Dendritic cell treated with granulocyte-macrophage colony-stimulating factor and Interleukin-4, amounts not matched to agents 40 ng/mL and 50 ng/mL, for 4 days (primary cell): ENCODE measurements at regions of chr9 and their contacts with region 1.

Region 1: GRCh38 chr9:121185178-121185745 is 16.4 kb downstream of the RAB14 start:
- H3K4me3 Mint-ChIP-seq: no peak overlapping the region
- H3K27ac Mint-ChIP-seq: no peak overlapping the region
- H3K4me1 Mint-ChIP-seq: peaks cover 17% of the 10 kb centered on the region
- H3K27me3 Mint-ChIP-seq: no peaks in the 10 kb centered on the region

Region 2: GRCh38 chr9:120985810-120986222 is 199.4 kb before region 1 on chr9:
- intact Hi-C with region 1: loop called (anchors 10 kb)
- H3K4me3 Mint-ChIP-seq: no peak overlapping the region
- H3K27ac Mint-ChIP-seq: no peak overlapping the region
- H3K4me1 Mint-ChIP-seq: no peaks in the 10 kb centered on the region
- H3K27me3 Mint-ChIP-seq: no peaks in the 10 kb centered on the region

Region 3: GRCh38 chr9:121115466-121115865 is 69.8 kb before region 1 on chr9:
- intact Hi-C with region 1: loop called (anchors 10 kb)
- H3K4me3 Mint-ChIP-seq: no peak overlapping the region
- H3K27ac Mint-ChIP-seq: no peak overlapping the region
- H3K4me1 Mint-ChIP-seq: peaks cover 10% of the 10 kb centered on the region
- H3K27me3 Mint-ChIP-seq: no peaks in the 10 kb centered on the region

Region 4: DNA sequence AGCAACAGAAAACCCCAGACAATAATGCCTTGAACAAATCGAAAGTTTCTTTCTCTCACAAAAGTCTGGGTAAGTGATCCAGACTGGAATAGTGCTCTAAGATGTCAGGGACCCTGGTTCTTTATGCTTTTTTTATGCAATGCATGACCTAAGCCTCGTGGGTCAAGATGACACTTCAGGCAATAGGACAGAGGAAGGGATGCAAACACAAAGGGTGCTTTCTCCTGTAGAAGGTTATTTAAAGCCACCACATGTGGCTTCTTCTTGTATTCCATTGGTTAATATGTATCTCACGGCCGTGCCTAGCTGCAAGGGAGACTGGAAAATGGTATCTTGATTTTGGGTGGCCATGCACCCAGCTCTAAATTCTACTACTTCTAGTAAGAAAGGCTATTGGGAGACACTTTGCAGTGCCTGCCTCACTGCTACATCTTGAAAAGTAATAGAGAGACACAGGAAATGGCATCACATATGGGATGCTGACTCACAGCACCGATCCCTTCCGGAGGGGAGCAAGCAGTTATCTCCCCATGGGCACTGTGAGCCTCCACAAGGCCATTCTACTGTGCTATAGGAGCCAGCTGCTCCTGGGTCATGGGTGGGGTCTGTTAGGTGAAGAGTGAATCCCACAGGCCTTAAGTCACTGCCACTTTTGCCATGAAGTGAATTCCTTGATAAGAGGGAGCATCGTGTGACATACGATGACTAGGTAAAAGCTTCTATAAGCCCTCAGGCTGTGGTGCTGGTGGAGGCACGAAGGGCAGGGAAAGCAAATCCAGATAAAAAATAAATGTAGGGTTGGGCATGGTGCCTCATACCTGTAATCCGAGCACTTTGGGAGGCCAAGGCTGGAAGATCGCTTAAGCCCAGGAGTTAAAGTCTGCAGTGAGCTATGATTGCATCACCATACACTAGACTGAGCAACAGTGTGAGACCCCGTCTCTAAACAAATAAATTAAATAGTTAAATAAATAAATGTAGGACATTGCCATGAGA is 48.9 kb after region 1 on chr9:
- intact Hi-C with region 1: no loop called
- H3K4me3 Mint-ChIP-seq: no peak overlapping the region
- H3K27ac Mint-ChIP-seq: peak overlapping the region; percentile 51
- H3K4me1 Mint-ChIP-seq: peaks cover 40% of the 10 kb centered on the region
- H3K27me3 Mint-ChIP-seq: peaks cover 1% of the 10 kb centered on the region